ENCODE measurements at regions of chr3 and their contacts with region 1.

Region 1: GRCh38 chr3:184272269-184272668 is 3.6 kb upstream of the ECE2 start:
- DNase-seq: no peak
- ATAC-seq: no peak

Region 2: DNA sequence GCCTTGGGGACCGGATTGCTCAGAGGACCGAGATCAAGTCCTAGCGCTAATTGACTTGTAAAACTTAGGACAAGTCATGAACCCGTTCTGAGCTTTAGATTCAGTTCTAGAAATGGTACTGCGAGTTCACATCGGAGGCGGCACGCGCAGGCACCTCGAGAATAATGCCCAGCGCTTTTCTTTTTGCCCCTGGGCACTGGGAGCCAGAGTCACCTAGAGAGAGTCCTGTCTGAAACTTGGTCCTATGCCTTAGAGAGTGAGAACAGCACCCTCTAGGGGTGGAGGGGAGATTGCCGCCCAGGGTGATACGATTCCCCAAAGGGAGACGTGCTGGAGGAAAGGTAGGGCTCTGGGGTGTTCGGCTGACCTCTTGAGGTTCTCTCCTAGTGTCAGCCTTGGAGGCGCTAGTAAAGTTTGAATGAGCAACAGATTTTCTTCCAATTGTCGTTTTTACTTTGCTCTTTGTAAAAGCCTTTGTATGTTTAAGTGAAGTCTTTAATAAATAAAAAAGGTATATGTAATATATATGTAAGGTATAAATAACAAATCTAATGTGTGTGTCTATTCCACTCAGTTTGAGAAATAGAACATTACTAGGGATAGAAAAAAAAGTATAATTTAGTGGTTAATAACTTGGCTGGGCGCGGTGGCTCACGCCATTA is 22.0 kb before region 1 on chr3:
- intact Hi-C with region 1: no loop called
- DNase-seq: peak; percentile 90
- ATAC-seq: peak; percentile 88

Region 3: DNA sequence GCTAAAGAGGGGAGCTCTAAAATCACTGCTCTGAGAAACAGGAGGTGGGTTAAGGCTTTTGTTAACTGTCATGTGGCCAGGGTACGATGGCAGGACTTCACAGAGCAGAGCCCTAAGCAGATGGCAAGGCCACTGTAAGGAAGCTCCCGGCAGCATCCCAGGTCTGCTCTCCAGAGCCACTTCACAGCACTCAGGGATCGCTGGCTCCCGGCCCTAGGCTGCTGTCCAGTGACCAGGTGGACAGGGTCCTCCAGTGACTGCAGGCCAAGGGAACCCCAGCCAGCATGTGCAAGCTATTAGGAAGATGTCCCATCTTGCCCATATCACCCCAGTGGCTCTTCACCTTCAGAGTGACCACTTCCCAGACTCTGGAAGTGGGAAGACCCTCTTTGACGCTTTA is 1216.2 kb after region 1 on chr3:
- intact Hi-C with region 1: loop called (anchors 5 kb)
- DNase-seq: no peak
- ATAC-seq: no peak